Naive thymus-derived CD4-positive, alpha-beta T cell (primary cell): ENCODE measurements at regions of chr2 and their contacts with region 1.

Region 1: DNA sequence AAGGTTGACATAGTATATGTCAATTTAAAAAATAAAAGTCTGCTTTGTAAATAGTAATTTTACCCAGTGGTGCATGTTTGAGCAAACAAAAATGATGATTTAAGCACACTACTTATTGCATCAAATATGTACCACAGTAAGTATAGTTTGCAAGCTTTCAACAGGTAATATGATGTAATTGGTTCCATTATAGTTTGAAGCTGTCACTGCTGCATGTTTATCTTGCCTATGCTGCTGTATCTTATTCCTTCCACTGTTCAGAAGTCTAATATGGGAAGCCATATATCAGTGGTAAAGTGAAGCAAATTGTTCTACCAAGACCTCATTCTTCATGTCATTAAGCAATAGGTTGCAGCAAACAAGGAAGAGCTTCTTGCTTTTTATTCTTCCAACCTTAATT is 78.6 kb upstream of the CSRNP3 start:
- DNase-seq: no peak
- ATAC-seq: no peak
- H3K4me3 ChIP-seq: no peak overlapping the region
- H3K4me3 Mint-ChIP-seq: no peak overlapping the region
- H3K27ac ChIP-seq: no peak overlapping the region
- H3K27ac Mint-ChIP-seq: no peak overlapping the region
- H3K4me1 ChIP-seq: no peaks in the 10 kb centered on the region
- H3K4me1 Mint-ChIP-seq: peaks cover 0 to 13% (median 3%) of the 10 kb centered on the region in 7 donors
- H3K27me3 ChIP-seq: no peaks in the 10 kb centered on the region
- H3K27me3 Mint-ChIP-seq: peaks cover 11 to 24% (median 16%) of the 10 kb centered on the region in 5 donors

Region 2: DNA sequence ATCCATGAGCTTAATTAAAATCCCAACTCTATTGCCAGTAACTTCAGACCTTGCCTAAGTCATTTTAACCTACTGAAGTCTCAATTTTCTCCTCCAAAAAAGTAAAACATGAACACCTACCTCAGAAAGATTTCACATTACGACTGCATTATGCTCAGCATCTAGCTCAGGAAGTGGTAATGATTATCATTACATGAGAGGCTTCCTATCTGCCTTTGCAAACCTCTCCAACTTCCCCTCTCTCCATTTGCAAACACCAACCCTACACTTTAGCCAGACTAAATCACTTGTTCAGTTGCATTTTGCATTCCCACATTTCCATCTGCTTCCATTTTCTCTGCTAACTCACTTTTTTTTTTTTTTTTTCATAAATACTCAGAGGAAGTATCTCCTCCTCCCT is 442.3 kb before region 1 on chr2:
- CTCF ChIA-PET with region 1: no interaction called
- POLR2A ChIA-PET with region 1: interaction called, 12 read pairs
- intact Hi-C with region 1: no loop called
- DNase-seq: no peak
- ATAC-seq: peak; percentile 65
- H3K4me3 ChIP-seq: no peak overlapping the region
- H3K4me3 Mint-ChIP-seq: no peak overlapping the region
- H3K27ac ChIP-seq: no peak overlapping the region
- H3K27ac Mint-ChIP-seq: peak overlapping the region in 1 of 9 donors; percentile 43
- H3K4me1 ChIP-seq: no peaks in the 10 kb centered on the region
- H3K4me1 Mint-ChIP-seq: peaks cover 0 to 6% (median 4%) of the 10 kb centered on the region in 7 donors
- H3K27me3 ChIP-seq: peaks cover 0 to 5% of the 10 kb centered on the region in 2 donors
- H3K27me3 Mint-ChIP-seq: peaks cover 11 to 20% (median 18%) of the 10 kb centered on the region in 5 donors

Region 3: DNA sequence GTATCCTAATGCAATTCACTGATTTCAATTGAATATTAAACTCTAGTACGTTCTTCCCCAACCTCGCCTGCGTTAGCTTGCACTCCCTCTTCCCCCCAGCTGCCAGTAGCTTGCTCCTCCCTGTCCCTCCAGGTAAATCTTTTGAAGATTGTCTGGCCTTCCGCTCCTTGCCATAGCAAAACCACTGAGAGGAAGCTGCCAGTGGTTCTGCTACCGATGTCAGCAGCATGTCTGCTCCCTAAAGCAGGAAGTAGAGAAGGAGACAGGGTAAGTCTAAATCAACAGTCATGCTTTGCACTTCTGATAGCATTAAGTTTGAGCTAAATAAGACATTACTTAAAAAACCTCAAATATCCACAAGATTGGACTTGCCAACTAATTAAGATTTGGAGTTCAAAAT is 62.6 kb before region 1 on chr2:
- CTCF ChIA-PET with region 1: no interaction called
- POLR2A ChIA-PET with region 1: no interaction called
- intact Hi-C with region 1: no loop called
- DNase-seq: peak in 7 of 9 donors; percentile 17 to 48 (median 40)
- ATAC-seq: peak; percentile 64
- H3K4me3 ChIP-seq: no peak overlapping the region
- H3K4me3 Mint-ChIP-seq: peak overlapping the region; percentile 12 to 87 (median 69)
- H3K27ac ChIP-seq: no peak overlapping the region
- H3K27ac Mint-ChIP-seq: peak overlapping the region in 5 of 9 donors; percentile 5 to 79 (median 53)
- H3K4me1 ChIP-seq: peaks cover 0 to 4% of the 10 kb centered on the region in 2 donors
- H3K4me1 Mint-ChIP-seq: peaks cover 10 to 21% (median 18%) of the 10 kb centered on the region in 7 donors
- H3K27me3 ChIP-seq: no peaks in the 10 kb centered on the region
- H3K27me3 Mint-ChIP-seq: peaks cover 0 to 6% (median 4%) of the 10 kb centered on the region in 5 donors